ENCODE measurements at regions of chr17 and their contacts with region 1.

Region 1: GRCh38 chr17:35932586-35932985 is 2.0 kb upstream of the RDM1 start:
- DNase-seq: no peak
- ATAC-seq: no peak
- H3K4me3 ChIP-seq: no peak overlapping the region
- H3K27ac ChIP-seq: no peak overlapping the region
- H3K4me1 ChIP-seq: peaks cover 11% of the 10 kb centered on the region
- CTCF ChIP-seq: no peak
- EP300 ChIP-seq: no peak
- POLR2A ChIP-seq: no peak
- RAD21 ChIP-seq: no peak

Region 2: DNA sequence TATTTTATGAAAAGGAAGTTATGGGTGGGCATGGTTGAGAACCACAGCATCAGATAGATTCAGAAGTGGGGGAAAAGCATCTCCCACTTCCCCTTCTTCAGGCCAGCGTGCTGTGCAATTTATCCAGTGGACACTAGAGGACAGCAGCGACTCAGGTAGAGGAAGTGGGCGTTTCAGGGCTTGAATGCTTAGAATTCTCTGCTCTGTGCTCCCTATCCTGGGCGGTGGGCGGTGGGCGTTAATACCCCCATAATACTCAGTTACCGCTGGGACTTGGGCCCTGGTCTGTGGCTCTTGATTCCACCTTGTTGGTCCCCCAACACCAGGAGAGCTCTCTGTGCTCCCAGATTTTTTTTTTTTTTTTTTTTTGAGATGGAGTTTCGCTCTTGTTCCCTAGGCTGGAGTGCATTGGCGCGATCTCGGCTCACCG is 14.6 kb after region 1 on chr17:
- CTCF ChIA-PET with region 1: interaction called, 13 read pairs
- POLR2A ChIA-PET with region 1: interaction called, 3 read pairs
- DNase-seq: peak; percentile 57 to 75
- ATAC-seq: peak; percentile 91 to 95
- H3K4me3 ChIP-seq: peak overlapping the region; percentile 42
- H3K27ac ChIP-seq: peak overlapping the region; percentile 49 to 73; a peak in 5 of 6 replicates
- H3K4me1 ChIP-seq: 0 out of 3 replicates have a peak, but pooled peaks cover 4% of the 10 kb centered on the region
- CTCF ChIP-seq: peak; percentile 90
- EP300 ChIP-seq: no peak
- POLR2A ChIP-seq: no peak
- RAD21 ChIP-seq: peak; percentile 84 to 85